Left cardiac atrium (tissue), 4 donors: ENCODE measurements at regions of chr3 and their contacts with region 1.

Region 1: DNA sequence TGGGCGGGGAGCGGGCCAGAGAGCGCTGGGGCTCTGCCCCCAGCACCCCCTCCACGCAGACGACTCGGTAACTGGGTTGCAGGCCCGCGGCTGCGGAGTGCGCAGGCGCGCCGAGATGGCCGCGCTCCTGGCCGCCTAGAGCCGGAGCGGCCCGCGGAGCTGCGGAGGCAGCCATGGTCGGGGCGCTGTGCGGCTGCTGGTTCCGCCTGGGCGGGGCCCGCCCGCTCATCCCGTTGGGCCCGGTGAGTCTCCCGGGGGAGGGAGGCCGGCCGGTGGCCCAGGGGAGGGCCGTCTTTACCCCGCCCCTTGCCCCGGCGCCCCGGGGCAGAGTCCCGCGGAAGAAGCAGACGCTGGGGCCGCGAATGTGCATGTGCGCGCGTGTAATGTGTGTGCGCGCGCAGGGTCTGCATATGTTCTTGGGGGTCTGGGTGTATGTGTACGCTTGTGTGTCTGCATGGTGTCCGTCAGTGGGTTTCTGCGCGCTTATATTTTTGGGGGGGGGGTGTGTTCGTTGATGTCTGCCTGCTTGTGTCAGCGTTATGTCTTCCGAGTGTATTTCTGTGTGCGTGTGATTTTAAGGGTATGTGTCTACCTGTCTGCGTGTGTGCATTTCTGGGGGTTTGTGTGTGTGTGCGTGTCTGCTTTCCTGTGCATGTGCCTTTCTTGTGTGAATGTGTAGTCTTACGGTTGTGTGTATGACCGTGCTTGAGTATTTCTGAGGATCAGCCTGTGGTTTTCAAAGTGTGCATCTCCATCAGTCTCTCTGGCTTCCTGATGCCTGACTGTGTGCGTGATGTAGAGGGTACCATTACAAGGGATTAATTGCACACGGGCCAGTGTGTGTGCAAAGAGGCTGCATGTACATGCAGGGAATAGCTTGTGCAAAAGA is at the start of gene ABHD14A:
- DNase-seq: peak; percentile 78
- ATAC-seq: peak; percentile 80 to 82
- total RNA-seq, gene ABHD14A: 18.1 to 18.3 TPM

Region 2: DNA sequence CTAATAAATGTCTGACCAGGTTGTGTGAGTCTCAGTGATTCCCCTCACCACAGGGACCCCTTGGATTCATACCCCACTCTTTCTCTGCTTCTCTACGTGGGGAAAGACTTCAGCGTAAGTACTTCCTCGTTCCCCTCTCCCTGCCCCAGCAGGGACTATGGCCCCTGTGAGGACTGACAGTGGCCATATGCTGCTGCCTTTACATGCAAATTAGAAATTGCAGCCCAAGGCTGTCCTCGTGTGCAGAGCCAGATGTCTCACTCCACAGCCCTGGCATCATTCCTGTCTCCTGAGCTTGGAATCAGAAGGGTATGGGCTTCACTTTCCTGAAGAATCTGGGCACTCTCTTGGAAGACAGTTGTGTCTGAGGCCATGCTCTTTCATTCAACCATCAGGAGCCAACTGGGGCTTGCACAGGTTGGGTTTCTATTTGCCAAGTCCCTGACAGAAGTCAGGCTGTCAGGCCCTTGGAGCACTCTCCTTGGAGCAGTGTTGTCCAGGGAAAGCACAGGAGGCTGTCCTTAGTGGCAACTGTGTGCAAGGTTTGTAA is 144.3 kb before region 1 on chr3:
- intact Hi-C with region 1: no loop called
- DNase-seq: no peak
- ATAC-seq: no peak

Region 3: GRCh38 chr3:51941798-51942602 is 33.2 kb before region 1 on chr3 and contains the starts of genes PARP3 and RRP9:
- intact Hi-C with region 1: loop called in 1 of 2 experiments (anchors 2 kb)
- DNase-seq: peak; percentile 100
- ATAC-seq: peak; percentile 95 to 96
- total RNA-seq, gene PARP3: 13.2 to 13.4 TPM
- total RNA-seq, gene RRP9: 8.9 to 17.2 TPM